CD14-positive monocyte (primary cell): ENCODE measurements at regions of chr17 and their contacts with region 1.

Region 1: GRCh38 chr17:82551779-82552457 is 32.4 kb downstream of the FOXK2 start:
- DNase-seq: peak; percentile 66 to 72 (median 71)
- H3K4me3 ChIP-seq: no peak overlapping the region
- H3K4me3 Mint-ChIP-seq: no peak overlapping the region
- H3K27ac ChIP-seq: no peak overlapping the region
- H3K27ac Mint-ChIP-seq: peak overlapping the region in 1 of 7 donors; percentile 64
- H3K4me1 ChIP-seq: peaks cover 35 to 38% of the 10 kb centered on the region in 2 donors
- H3K4me1 Mint-ChIP-seq: peaks cover 45% of the 10 kb centered on the region
- H3K27me3 ChIP-seq: no peaks in the 10 kb centered on the region
- H3K27me3 Mint-ChIP-seq: no peaks in the 10 kb centered on the region
- CTCF ChIP-seq: peak; percentile 87

Region 2: GRCh38 chr17:82351716-82352488 is 200.0 kb before region 1 on chr17:
- intact Hi-C with region 1: loop called (anchors 2 to 5 kb)
- DNase-seq: peak; percentile 77 to 82 (median 80)
- H3K4me3 ChIP-seq: no peak overlapping the region
- H3K4me3 Mint-ChIP-seq: no peak overlapping the region
- H3K27ac ChIP-seq: no peak overlapping the region
- H3K27ac Mint-ChIP-seq: peak overlapping the region in 1 of 7 donors; percentile 48
- H3K4me1 ChIP-seq: peaks cover 1 to 3% of the 10 kb centered on the region in 2 donors
- H3K4me1 Mint-ChIP-seq: peaks cover 3% of the 10 kb centered on the region
- H3K27me3 ChIP-seq: peaks cover 0 to 2% of the 10 kb centered on the region in 2 donors
- H3K27me3 Mint-ChIP-seq: peaks cover 4 to 12% (median 6%) of the 10 kb centered on the region in 3 donors
- CTCF ChIP-seq: peak; percentile 94

Region 3: GRCh38 chr17:82494236-82495055 is 57.5 kb before region 1 on chr17:
- intact Hi-C with region 1: loop called (anchors 1 to 10 kb)
- DNase-seq: peak; percentile 77 to 90 (median 83)
- H3K4me3 ChIP-seq: no peak overlapping the region
- H3K4me3 Mint-ChIP-seq: peak overlapping the region in 1 of 2 donors; percentile 12
- H3K27ac ChIP-seq: peak overlapping the region; percentile 32 to 44
- H3K27ac Mint-ChIP-seq: peak overlapping the region; percentile 21 to 82 (median 53)
- H3K4me1 ChIP-seq: peaks cover 23 to 30% of the 10 kb centered on the region in 2 donors
- H3K4me1 Mint-ChIP-seq: peaks cover 30% of the 10 kb centered on the region
- H3K27me3 ChIP-seq: no peaks in the 10 kb centered on the region
- H3K27me3 Mint-ChIP-seq: peaks cover 0 to 7% (median 0%) of the 10 kb centered on the region in 3 donors
- CTCF ChIP-seq: peak; percentile 82

Region 4: GRCh38 chr17:82518826-82519810 is 32.8 kb before region 1 on chr17 and contains the start of gene FOXK2:
- intact Hi-C with region 1: loop called in 1 of 2 experiments (anchors 5 kb)
- DNase-seq: peak; percentile 92 to 94 (median 93)
- H3K4me3 ChIP-seq: peak within 1 kb of the TSS; percentile 55 to 86 (median 85)
- H3K4me3 Mint-ChIP-seq: peak within 1 kb of the TSS; percentile 86 to 90
- H3K27ac ChIP-seq: peak within 1 kb of the TSS; percentile 67 to 92
- H3K27ac Mint-ChIP-seq: peak within 1 kb of the TSS; percentile 68 to 93 (median 84)
- H3K4me1 ChIP-seq: peaks cover 26 to 34% of the 10 kb centered on the region in 2 donors
- H3K4me1 Mint-ChIP-seq: peaks cover 27% of the 10 kb centered on the region
- H3K27me3 ChIP-seq: no peaks in the 10 kb centered on the region
- H3K27me3 Mint-ChIP-seq: peaks cover 0 to 2% (median 0%) of the 10 kb centered on the region in 3 donors
- CTCF ChIP-seq: no peak
- polyA plus RNA-seq, gene FOXK2: 3.5 to 18.4 (median 4.7) TPM

Region 5: DNA sequence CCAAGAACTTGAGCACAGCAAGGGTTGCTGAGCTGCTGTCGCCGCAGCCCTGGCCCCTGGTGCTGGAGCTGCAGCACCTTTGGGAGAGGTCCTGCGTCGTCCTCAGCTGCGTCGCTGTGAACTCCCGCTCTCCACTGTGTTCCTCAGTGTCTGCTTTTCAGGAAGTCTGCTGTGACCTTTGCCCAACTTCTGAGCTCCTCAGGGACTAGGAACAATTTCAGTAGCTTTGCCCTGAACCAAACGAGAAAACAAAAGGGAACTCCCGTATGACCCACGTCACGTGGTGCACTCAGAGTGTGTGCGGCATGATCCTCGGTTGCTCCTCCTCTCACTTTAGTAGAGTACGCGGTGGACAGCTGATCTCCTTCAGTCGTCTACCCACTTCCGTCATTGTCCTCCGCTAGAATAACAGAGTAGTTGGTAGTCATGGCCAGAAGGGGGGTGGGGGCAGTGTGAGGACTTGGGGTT is 52.1 kb after region 1 on chr17:
- intact Hi-C with region 1: no loop called
- DNase-seq: peak; percentile 88 to 96 (median 95)
- H3K4me3 ChIP-seq: peak overlapping the region in 1 of 3 experiments; percentile 38
- H3K4me3 Mint-ChIP-seq: peak overlapping the region; percentile 61 to 78
- H3K27ac ChIP-seq: peak overlapping the region; percentile 60 to 71
- H3K27ac Mint-ChIP-seq: peak overlapping the region; percentile 86 to 97 (median 93)
- H3K4me1 ChIP-seq: peaks cover 16% of the 10 kb centered on the region in 2 donors
- H3K4me1 Mint-ChIP-seq: peaks cover 16% of the 10 kb centered on the region
- H3K27me3 ChIP-seq: no peaks in the 10 kb centered on the region
- H3K27me3 Mint-ChIP-seq: peaks cover 0 to 7% (median 0%) of the 10 kb centered on the region in 3 donors
- CTCF ChIP-seq: no peak